Esophagus muscularis mucosa (tissue), 4 donors: ENCODE measurements at regions of chr18 and their contacts with region 1.

Region 1: GRCh38 chr18:7177116-7177744 is 53.7 kb upstream of the LRRC30 start:
- DNase-seq: no peak
- H3K4me3 ChIP-seq: no peak overlapping the region
- H3K27ac ChIP-seq: no peak overlapping the region
- H3K4me1 ChIP-seq: no peaks in the 10 kb centered on the region
- H3K27me3 ChIP-seq: peaks cover 0 to 16% (median 0%) of the 10 kb centered on the region in 4 donors
- CTCF ChIP-seq: peak; percentile 69 to 83 (median 79)
- EP300 ChIP-seq: no peak
- POLR2A ChIP-seq: no peak

Region 2: DNA sequence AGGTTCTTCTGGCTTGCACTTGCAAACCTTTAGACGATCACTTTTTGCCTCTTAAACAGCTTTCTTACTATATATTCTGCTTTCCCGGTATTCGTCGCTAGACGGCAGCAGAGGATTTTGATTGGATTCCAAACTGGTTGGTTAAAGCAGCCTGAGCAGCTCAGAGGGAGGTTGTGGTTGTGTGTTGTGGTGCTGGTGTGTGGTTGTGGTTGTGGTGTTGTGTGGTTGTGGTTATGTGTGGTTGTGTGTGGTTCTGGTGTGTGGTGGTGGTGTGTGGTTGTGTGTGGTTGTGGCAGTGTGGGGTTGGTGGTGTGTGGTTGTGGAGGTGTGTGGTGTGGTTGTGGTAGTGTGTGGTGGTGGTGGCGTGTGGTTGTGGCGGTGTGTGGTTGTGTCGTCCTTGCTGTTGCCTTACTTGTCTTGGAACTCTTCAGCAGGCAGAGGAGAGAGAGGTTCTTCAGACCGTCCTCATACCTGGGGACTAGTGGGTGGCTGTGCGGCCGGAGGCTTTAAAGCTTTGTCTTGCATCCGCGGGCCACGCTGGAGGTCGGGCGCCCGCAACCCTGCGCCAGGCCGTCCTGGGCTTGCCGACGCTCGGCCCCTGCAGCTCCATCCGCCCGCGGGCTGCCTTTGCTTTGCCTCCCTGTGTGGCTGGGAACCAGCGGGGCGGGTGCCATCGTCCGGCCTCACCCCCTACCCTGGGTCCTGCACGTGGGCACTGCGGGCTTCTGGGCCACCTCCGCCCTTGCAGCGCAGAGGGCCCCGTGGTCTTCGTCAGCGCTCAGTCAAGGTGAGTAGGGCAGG is 256.9 kb before region 1 on chr18:
- intact Hi-C with region 1: loop called (anchors 5 kb)
- DNase-seq: no peak
- H3K4me3 ChIP-seq: no peak overlapping the region
- H3K27ac ChIP-seq: no peak overlapping the region
- H3K4me1 ChIP-seq: no peaks in the 10 kb centered on the region
- H3K27me3 ChIP-seq: peaks cover 0 to 17% (median 0%) of the 10 kb centered on the region in 4 donors
- CTCF ChIP-seq: peak; percentile 39 to 61 (median 45)
- EP300 ChIP-seq: no peak
- POLR2A ChIP-seq: no peak

Region 3: DNA sequence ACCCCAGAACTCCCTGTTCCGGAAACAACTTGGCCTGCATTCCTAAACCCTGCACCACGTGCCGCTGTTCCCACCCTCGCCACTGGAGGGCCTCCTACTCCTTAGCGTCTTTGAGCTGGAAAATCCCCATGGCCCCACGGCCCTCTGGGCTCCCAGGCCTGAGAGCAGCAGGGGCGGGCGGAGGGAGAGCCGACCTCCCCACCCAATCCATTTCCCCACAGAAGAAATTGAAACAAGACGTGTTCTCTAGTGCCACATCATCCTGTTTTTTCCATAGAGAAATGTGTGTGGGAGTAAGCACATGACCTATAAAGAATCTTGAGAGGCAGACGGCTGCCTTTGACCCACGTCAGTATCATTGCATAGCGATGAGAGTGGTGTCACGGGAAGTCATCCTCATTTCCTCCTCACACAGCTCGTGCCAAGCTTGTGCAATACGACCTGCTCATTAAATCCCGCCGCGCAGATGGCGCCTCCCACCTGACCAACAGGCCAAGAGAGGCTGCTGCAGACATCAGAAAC is 138.8 kb before region 1 on chr18:
- intact Hi-C with region 1: loop called (anchors 2 kb)
- DNase-seq: no peak
- H3K4me3 ChIP-seq: peak overlapping the region; percentile 7 to 44 (median 36)
- H3K27ac ChIP-seq: peak overlapping the region; percentile 48 to 74 (median 54)
- H3K4me1 ChIP-seq: peaks cover 0 to 13% (median 9%) of the 10 kb centered on the region in 4 donors
- H3K27me3 ChIP-seq: no peaks in the 10 kb centered on the region
- CTCF ChIP-seq: peak; percentile 61 to 79 (median 73)
- EP300 ChIP-seq: no peak
- POLR2A ChIP-seq: no peak